Posterior vena cava (tissue), 2 donors: ENCODE measurements at regions of chr5 and their contacts with region 1.

Region 1: DNA sequence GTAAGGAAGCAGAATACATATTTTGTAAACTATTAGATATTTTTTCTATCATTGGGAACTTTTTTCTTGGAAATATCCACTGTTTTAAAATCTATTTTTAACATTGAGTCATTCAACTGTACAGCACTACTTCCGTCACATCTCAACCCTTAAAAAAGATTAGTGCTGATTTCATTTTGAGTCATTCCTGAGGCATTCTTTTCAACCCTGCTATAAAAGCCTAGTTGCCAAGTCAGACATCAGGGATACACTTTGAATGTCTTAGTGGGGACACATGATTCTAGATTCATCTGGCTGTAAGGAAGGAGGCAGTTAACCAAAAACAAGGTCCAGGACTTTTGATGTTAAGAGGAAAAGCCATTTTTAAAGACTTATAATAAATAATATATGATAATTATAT is 160.9 kb downstream of the GIN1 start:
- DNase-seq: no peak

Region 2: GRCh38 chr5:101955891-101956290 is 1003.2 kb before region 1 on chr5:
- intact Hi-C with region 1: no loop called
- DNase-seq: no peak

Region 3: DNA sequence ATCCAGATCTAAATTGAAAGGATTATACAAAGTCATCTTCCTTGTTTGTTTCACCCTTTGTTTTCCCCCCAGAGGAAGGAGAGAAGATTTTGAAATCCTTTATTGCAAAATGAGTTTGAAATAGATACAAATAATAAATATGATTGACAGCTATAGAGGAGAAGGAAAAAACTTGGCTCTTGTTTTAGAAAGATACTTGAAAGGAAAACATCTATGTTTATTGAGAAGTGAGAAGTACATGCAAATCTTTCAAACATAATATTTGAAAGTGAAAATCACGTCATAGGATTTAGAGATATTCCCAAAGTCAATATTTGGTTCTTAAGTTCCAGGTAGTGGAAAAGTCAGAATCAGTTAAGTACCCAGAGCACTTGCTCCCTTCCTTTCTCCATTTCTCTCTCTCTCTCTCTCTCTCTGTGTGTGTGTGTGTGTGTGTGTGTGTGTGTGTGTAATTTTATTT is 176.7 kb before region 1 on chr5:
- intact Hi-C with region 1: loop called in 1 of 2 experiments (anchors 10 kb)
- DNase-seq: no peak

Region 4: DNA sequence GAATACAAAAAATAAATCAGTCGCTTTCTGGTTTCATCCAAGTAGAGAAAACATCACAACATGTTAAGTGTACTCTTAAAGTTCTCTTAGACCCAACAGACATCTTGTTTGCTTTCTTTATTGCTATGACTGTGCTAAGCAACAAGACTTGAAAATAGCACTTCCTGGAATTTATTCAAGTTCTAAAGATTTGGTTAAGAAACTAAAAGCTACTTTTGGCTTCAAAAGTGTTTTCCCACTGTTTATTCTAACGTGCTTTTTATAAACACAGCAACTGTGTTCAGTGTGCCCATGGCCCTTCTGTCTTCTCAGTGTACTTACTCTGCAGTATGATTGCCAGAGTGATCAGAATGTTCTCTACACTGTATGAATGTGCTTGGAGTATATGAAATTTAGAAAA is 51.1 kb after region 1 on chr5:
- intact Hi-C with region 1: no loop called
- DNase-seq: no peak

Region 5: GRCh38 chr5:103031607-103032006 is 72.6 kb after region 1 on chr5:
- intact Hi-C with region 1: no loop called
- DNase-seq: no peak